ENCODE measurements at regions of chr4 and their contacts with region 1.

Region 1: GRCh38 chr4:99405433-99406115 is 29.6 kb downstream of the ADH7 start:
- DNase-seq: no peak
- H3K4me3 ChIP-seq: peak overlapping the region in 1 of 4 donors; percentile 19
- H3K27ac ChIP-seq: peak overlapping the region; percentile 58 to 74 (median 70)
- H3K4me1 ChIP-seq: peaks cover 19 to 75% (median 63%) of the 10 kb centered on the region in 4 donors
- H3K27me3 ChIP-seq: no peaks in the 10 kb centered on the region
- CTCF ChIP-seq: peak; percentile 90 to 96 (median 95)
- EP300 ChIP-seq: no peak
- POLR2A ChIP-seq: no peak

Region 2: GRCh38 chr4:99117876-99118693 is 287.5 kb before region 1 on chr4:
- intact Hi-C with region 1: loop called (anchors 2 kb)
- DNase-seq: no peak
- H3K4me3 ChIP-seq: no peak overlapping the region
- H3K27ac ChIP-seq: no peak overlapping the region
- H3K4me1 ChIP-seq: peaks cover 0 to 24% (median 7%) of the 10 kb centered on the region in 4 donors
- H3K27me3 ChIP-seq: no peaks in the 10 kb centered on the region
- CTCF ChIP-seq: peak in 2 of 3 experiments; percentile 32 to 41
- EP300 ChIP-seq: no peak
- POLR2A ChIP-seq: no peak

Region 3: GRCh38 chr4:99201690-99202089 is 203.9 kb before region 1 on chr4:
- intact Hi-C with region 1: loop called (anchors 5 kb)
- DNase-seq: no peak
- H3K4me3 ChIP-seq: no peak overlapping the region
- H3K27ac ChIP-seq: peak overlapping the region; percentile 47 to 63 (median 58)
- H3K4me1 ChIP-seq: peaks cover 11 to 21% (median 15%) of the 10 kb centered on the region in 4 donors
- H3K27me3 ChIP-seq: no peaks in the 10 kb centered on the region
- CTCF ChIP-seq: peak; percentile 29 to 37 (median 31)
- EP300 ChIP-seq: no peak
- POLR2A ChIP-seq: no peak

Region 4: GRCh38 chr4:99324979-99325378 is 80.6 kb before region 1 on chr4:
- intact Hi-C with region 1: loop called (anchors 5 kb)
- DNase-seq: no peak
- H3K4me3 ChIP-seq: no peak overlapping the region
- H3K27ac ChIP-seq: peak overlapping the region; percentile 79 to 85 (median 83)
- H3K4me1 ChIP-seq: peaks cover 18 to 53% (median 40%) of the 10 kb centered on the region in 4 donors
- H3K27me3 ChIP-seq: no peaks in the 10 kb centered on the region
- CTCF ChIP-seq: no peak
- EP300 ChIP-seq: peak; percentile 79
- POLR2A ChIP-seq: no peak

Region 5: GRCh38 chr4:99438405-99438780 is 32.8 kb after region 1 on chr4:
- intact Hi-C with region 1: no loop called
- DNase-seq: no peak
- H3K4me3 ChIP-seq: no peak overlapping the region
- H3K27ac ChIP-seq: peak overlapping the region in 1 of 4 donors; percentile 32
- H3K4me1 ChIP-seq: peaks cover 0 to 16% (median 13%) of the 10 kb centered on the region in 4 donors
- H3K27me3 ChIP-seq: no peaks in the 10 kb centered on the region
- CTCF ChIP-seq: no peak
- EP300 ChIP-seq: no peak
- POLR2A ChIP-seq: no peak

Region 6: GRCh38 chr4:99875072-99875471 is 469.5 kb after region 1 on chr4:
- intact Hi-C with region 1: no loop called
- DNase-seq: no peak
- H3K4me3 ChIP-seq: no peak overlapping the region
- H3K27ac ChIP-seq: no peak overlapping the region
- H3K4me1 ChIP-seq: peaks cover 0 to 10% (median 0%) of the 10 kb centered on the region in 4 donors
- H3K27me3 ChIP-seq: no peaks in the 10 kb centered on the region
- CTCF ChIP-seq: no peak
- EP300 ChIP-seq: no peak
- POLR2A ChIP-seq: no peak

Region 7: GRCh38 chr4:100017637-100018310 is 612.2 kb after region 1 on chr4:
- intact Hi-C with region 1: no loop called
- DNase-seq: no peak
- H3K4me3 ChIP-seq: no peak overlapping the region
- H3K27ac ChIP-seq: no peak overlapping the region
- H3K4me1 ChIP-seq: peaks cover 0 to 5% (median 2%) of the 10 kb centered on the region in 4 donors
- H3K27me3 ChIP-seq: no peaks in the 10 kb centered on the region
- CTCF ChIP-seq: no peak
- EP300 ChIP-seq: no peak
- POLR2A ChIP-seq: no peak

Measured in esophagus muscularis mucosa (tissue), 4 donors.